Right ventricle myocardium inferior (tissue), 1 donor: ENCODE measurements at regions of chr9 and their contacts with region 1.

Region 1: DNA sequence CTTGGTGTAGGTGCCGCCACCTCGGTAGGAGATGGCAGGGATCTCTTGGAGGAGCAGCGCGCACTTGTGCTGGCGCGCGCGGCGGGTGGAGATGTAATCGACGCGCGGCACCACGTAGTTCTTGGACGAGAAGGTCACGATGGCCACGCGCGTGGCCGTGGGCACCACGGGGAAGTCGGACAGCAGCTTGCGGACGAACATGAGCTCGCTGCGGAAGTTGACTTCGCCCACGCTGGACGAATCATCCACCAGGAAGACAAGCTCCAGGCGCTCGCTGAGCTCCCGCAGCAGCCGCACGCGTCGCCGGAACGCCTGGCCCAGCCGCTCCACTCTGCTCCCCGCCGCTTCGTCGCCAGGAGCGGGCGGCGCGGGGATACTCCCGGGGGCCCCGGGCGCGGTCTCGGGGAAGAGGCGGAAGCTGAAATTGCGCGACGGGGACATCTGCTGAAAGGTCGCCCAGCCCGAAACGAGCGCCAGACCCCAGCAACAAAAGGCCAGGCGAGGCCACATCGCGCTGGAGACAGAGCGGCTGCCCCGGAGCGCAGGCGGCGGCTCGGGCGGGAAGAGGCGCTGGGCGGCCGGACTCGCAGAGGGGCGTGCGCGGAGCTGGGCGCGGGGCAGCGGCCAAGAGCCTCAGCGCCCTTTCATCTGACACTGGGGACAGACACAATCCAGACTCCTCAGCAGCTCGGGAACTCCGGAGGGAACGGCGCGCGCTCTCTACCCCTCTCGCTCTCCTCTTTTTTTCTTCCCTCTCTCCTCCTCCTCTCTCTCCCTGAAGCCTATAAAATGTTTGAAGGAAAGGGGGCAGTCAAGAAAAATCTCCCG is at the start of gene SVEP1:
- DNase-seq: peak; percentile 78
- ATAC-seq: peak; percentile 78
- total RNA-seq, gene SVEP1: 6.4 TPM

Region 2: DNA sequence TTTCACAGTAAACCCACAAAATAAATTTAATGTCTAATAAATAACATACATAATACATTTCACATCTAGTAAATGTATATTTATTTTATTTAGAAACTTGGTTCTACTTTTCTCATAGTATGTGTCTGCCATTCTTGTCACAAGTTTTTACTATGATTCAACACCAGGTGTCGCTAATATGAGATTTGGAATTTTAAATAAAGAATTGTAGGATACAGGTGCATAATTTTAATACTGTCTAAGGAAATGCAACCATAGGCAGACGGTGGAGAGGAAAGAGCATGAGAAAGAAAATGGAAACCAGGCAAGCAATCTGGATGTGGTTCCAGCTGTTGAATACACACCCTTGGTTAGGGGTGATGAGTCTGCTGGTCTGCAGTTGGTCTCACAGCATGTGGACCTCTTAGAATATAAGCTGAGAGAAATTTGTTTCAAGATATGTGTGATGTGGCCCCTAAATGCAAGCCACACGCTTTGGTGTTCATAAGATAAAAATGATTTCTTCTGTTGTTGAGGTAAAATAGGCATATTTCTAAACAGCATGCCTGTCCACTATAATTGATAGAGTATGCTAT is 126.9 kb before region 1 on chr9:
- intact Hi-C with region 1: loop called (anchors 5 kb)
- DNase-seq: no peak
- ATAC-seq: no peak

Region 3: DNA sequence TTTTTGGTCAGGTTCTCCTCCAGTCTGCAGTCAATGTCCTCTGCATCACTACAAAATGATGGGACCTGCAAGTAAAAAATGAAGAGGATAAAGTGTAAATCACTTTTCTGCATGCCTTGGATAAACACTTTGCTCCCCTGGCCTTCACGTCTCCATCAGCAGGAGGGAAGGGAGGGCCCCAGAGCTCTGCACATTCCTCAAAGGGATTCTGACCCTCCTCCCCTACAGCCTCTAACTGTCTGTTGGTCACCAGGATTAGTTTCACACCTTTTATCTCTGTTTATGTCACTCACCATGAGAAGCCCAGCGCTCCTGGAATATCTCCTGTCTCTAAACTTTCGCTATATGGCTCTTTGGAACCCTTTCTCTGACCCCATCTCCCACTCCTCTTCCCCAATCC is 103.0 kb before region 1 on chr9:
- intact Hi-C with region 1: no loop called
- DNase-seq: no peak
- ATAC-seq: no peak

Region 4: DNA sequence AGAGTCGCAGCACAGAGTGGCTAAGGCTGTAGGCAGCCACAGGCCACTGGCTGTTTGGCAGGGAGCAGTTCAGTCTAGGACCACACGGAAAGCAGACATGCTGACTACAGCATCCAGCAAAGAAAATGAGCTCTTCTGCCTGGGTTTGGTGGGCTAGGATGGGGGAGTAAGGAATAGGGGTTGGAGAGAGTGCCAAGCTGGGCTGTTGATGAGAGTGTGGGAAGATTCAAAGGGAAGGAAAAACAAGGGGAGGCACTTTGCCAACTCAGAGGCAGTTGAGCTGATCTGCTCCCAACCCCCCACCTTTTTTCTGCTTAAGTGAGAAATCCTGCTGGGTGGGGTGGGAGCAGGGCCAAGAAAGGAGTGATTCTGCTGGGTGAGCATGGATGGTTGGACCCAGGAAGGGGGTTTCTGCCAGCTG is 35.6 kb before region 1 on chr9:
- intact Hi-C with region 1: loop called (anchors 2 kb)
- DNase-seq: peak; percentile 66
- ATAC-seq: peak; percentile 28